Mammary epithelial cell (primary cell): ENCODE measurements at regions of chr1 and their contacts with region 1.

Region 1: DNA sequence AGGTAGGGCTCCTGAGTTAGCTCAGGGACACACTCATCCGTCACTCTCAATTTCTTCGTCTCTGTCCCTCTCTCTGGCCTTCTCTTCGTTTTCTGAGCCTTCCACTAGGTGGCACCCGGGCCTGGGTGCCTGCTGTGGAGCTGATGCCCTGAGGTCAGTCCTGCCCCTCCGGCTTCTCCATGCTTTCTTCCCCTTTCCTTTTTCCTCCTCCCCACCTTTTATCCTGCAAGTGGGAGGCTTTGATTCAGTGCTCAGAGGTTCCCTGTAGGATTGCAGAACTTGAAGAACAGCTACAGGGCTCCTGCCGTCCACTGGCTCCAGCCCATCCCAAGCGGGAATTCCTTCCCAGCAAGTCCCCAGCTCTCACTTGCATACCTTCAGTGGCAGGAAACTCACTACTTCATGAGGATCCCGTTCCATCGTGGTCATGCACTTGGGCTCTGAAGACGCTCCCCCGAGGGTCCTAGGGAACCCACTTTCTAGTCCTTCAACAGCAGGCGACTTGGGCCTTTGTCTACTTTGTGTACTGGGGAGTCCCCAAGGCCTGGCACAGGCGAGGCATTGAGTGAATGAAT is 45.6 kb downstream of the SRRM1 start:
- DNase-seq: peak; percentile 62
- H3K4me3 ChIP-seq: no peak overlapping the region
- H3K27ac ChIP-seq: no peak overlapping the region
- H3K4me1 ChIP-seq: peaks cover 11% of the 10 kb centered on the region
- H3K27me3 ChIP-seq: no peaks in the 10 kb centered on the region
- CTCF ChIP-seq: peak; percentile 70 to 89

Region 2: DNA sequence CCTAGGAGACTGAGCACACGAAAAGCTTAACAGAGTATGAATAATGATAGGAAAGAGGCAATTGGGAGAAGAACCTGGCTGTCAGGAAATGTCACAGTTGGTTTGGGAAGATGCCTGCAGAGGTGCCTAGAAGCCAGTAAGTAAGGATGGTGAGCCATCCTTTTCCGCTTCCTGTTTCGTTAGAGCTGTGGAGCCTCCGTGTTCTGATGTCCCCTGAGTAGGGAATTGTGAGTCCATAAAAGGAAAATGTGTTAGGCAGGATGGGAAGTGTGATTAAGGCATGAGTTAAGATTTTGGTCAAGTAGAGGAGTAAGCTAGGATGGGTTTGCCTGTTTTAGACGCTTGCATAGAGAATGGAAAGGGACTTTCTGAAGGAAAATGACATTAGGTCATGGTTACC is 65.5 kb after region 1 on chr1:
- CTCF ChIA-PET with region 1: interaction called, 13 read pairs
- dilution Hi-C with region 1: no loop called
- in situ Hi-C with region 1: no loop called
- intact Hi-C with region 1: no loop called
- DNase-seq: no peak
- H3K4me3 ChIP-seq: no peak overlapping the region
- H3K27ac ChIP-seq: no peak overlapping the region
- H3K4me1 ChIP-seq: peaks cover 6% of the 10 kb centered on the region
- H3K27me3 ChIP-seq: no peaks in the 10 kb centered on the region
- CTCF ChIP-seq: no peak

Region 3: DNA sequence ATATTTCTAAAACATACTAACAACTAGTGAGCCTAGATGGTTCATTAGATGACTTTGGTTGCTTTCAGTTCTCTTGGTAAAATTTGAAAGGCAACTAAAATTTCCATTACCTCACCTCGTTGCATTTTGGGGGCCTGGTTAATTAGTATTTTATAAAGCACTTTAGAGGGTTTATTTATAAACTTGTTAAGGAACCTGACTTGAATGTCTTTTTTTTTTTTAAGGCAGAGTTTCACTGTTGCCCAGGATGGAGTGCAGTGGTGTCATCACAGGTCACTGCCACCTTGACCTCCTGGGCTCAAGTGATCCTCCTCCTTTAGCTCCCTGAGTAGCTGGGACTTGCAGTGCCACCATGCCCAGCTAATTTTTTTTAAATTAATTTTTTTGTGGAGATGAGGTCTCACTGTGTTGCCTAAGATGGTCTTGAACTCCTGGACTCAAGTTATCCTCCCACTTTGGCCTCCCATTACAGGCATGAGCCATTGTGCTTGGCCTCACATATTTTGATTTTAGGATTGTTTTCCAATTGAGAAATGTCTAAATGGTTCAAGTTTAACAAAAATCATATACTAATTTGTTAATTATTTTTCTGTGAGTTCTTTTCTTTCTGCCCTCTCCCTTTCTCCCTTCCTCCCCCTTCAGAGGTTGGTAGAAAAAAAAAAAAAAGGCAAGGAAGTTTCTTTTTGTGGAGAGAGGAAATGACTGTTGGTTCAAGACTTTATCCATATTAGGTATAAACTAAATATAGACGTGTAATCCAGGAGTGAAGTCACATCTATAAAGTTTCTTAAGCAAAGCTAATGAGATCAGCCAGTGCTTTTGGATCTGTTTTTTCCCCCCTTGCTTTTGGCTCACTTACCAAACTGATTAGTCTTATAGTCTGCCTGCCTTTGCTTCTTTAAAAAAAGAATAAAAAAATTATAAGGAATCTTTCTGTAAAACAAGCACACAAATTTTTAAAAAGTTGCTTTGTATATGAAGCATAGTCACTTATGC is 81.2 kb after region 1 on chr1:
- CTCF ChIA-PET with region 1: interaction called, 11 read pairs
- dilution Hi-C with region 1: no loop called
- in situ Hi-C with region 1: no loop called
- intact Hi-C with region 1: no loop called
- DNase-seq: peak; percentile 84
- H3K4me3 ChIP-seq: no peak overlapping the region
- H3K27ac ChIP-seq: peak overlapping the region; percentile 68
- H3K4me1 ChIP-seq: peaks cover 25% of the 10 kb centered on the region
- H3K27me3 ChIP-seq: no peaks in the 10 kb centered on the region
- CTCF ChIP-seq: no peak

Region 4: DNA sequence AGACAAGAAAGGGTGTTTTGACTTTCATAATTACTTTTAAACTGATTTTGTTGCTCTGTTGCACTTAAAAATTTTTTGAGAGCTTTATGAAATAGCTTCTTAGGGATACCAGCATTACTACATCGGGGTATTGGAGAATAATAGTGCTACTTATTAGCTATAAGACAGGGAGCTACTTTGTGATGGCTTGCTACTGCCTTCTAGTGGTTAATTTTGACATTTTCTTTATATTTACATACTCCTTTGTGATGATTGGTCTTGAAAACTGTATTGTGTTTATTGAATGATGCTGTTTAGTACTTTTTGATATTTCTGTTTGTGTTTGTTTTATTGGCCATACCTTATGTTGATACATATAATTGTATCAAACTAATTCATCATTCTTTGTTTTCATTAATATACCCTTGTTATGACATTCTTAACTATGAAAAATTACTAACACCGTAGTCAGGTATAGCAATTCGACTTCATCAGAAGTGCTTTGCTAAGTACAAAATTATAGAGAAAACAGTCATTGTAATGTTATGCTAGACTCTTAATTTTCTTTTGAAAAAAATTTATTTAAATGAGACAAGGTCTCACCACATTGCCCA is 142.1 kb after region 1 on chr1:
- CTCF ChIA-PET with region 1: interaction called, 12 read pairs
- dilution Hi-C with region 1: no loop called
- in situ Hi-C with region 1: loop called (anchors 5 kb)
- intact Hi-C with region 1: loop called (anchors 2 kb)
- DNase-seq: peak; percentile 55
- H3K4me3 ChIP-seq: no peak overlapping the region
- H3K27ac ChIP-seq: no peak overlapping the region
- H3K4me1 ChIP-seq: peaks cover 3% of the 10 kb centered on the region
- H3K27me3 ChIP-seq: no peaks in the 10 kb centered on the region
- CTCF ChIP-seq: peak; percentile 72 to 83

Region 5: GRCh38 chr1:24897767-24898483 is 209.2 kb after region 1 on chr1:
- CTCF ChIA-PET with region 1: interaction called, 25 read pairs
- dilution Hi-C with region 1: no loop called
- in situ Hi-C with region 1: no loop called
- intact Hi-C with region 1: no loop called
- DNase-seq: peak; percentile 32
- H3K4me3 ChIP-seq: no peak overlapping the region
- H3K27ac ChIP-seq: no peak overlapping the region
- H3K4me1 ChIP-seq: no peaks in the 10 kb centered on the region
- H3K27me3 ChIP-seq: no peaks in the 10 kb centered on the region
- CTCF ChIP-seq: peak; percentile 84 to 91